Caco-2 (cell line): ENCODE measurements at regions of chr3 and their contacts with region 1.

Region 1: DNA sequence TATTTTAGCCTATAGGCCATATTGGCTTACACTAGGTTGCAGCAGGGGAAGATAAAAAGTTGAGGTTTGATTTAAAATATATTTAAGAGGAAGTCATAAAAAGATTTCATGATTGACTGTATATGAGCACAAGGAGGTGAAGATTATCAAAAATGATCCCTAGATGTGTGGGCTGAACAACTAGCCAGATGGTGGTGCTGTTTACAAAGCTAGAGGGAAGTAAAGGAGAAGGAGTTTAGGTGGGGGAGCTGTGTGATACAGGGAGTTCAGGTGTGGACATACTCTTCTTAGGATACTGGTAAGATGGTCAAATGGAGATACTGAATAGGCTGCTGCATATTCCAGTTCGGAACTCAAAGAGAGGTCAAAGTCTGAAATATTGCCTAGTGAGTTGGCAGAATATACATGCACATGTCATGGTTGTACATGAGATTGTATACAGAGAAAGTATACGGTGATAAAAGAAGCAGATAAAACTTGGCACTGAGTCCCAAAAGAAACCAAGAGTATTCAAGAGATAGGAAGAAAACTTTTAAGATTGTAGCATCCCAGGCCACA is 727.8 kb downstream of the NLGN1 start:
- DNase-seq: peak in 1 of 2 experiments; percentile 32
- H3K4me3 ChIP-seq: no peak overlapping the region
- H3K4me3 Mint-ChIP-seq: no peak overlapping the region
- H3K27ac Mint-ChIP-seq: no peak overlapping the region
- H3K4me1 ChIP-seq: no peaks in the 10 kb centered on the region
- H3K4me1 Mint-ChIP-seq: peaks cover 22% of the 10 kb centered on the region
- H3K27me3 ChIP-seq: no peaks in the 10 kb centered on the region
- H3K27me3 Mint-ChIP-seq: no peaks in the 10 kb centered on the region
- CTCF ChIP-seq: peak in 1 of 2 experiments; percentile 51

Region 2: DNA sequence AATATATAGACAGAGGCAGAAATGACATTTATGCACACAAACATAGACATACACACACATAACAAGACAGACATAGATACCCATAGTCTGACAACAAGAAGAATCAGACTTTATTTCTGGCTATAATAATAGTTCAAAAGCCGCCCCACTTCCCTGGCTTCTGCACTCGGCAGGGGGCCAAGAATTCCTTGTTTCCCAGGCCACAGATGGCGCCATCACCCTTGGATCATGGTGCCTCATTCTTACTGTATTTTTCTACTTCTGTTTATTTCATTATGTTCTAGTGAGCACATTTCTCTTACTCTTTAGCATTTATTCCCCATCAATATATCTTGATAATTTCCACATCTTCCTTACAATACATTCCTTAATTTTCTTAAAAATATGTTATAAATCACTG is 340.3 kb before region 1 on chr3:
- CTCF ChIA-PET with region 1: no interaction called
- POLR2A ChIA-PET with region 1: no interaction called
- intact Hi-C with region 1: no loop called
- DNase-seq: peak in 1 of 2 experiments; percentile 4
- H3K4me3 ChIP-seq: no peak overlapping the region
- H3K4me3 Mint-ChIP-seq: no peak overlapping the region
- H3K27ac Mint-ChIP-seq: no peak overlapping the region
- H3K4me1 ChIP-seq: no peaks in the 10 kb centered on the region
- H3K4me1 Mint-ChIP-seq: no peaks in the 10 kb centered on the region
- H3K27me3 ChIP-seq: no peaks in the 10 kb centered on the region
- H3K27me3 Mint-ChIP-seq: peaks cover 9% of the 10 kb centered on the region
- CTCF ChIP-seq: no peak

Region 3: DNA sequence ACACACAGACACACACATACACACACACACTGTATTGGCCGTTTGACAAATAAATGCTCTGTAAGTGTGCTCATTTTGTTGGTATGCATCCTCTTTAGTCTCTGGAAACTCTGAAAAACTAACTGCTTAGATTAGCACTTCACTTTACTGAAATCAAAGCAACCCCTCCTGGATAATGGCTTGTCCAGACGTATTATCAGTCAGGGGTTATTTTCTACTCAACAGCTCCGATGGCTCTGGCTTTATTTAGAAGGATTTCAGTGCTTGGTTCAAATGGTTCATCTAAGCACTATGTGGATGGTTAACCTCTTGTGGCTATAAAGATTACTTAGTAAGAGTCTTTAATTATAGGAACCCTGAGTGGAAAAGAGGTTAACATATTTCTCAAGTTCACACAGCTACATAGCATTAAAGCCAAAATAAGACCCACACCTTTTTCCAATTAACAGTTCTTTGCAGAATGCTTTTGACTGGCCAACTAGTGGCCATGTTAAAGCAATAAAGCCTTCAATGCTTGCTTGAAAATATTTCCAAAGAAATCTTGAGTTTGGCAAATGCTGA is 217.7 kb after region 1 on chr3:
- CTCF ChIA-PET with region 1: no interaction called
- POLR2A ChIA-PET with region 1: no interaction called
- intact Hi-C with region 1: loop called (anchors 10 kb)
- DNase-seq: no peak
- H3K4me3 ChIP-seq: no peak overlapping the region
- H3K4me3 Mint-ChIP-seq: no peak overlapping the region
- H3K27ac Mint-ChIP-seq: no peak overlapping the region
- H3K4me1 ChIP-seq: no peaks in the 10 kb centered on the region
- H3K4me1 Mint-ChIP-seq: no peaks in the 10 kb centered on the region
- H3K27me3 ChIP-seq: no peaks in the 10 kb centered on the region
- H3K27me3 Mint-ChIP-seq: no peaks in the 10 kb centered on the region
- CTCF ChIP-seq: no peak